WTC11 (cell line): ENCODE measurements at regions of chr20 and their contacts with region 1.

Region 1: DNA sequence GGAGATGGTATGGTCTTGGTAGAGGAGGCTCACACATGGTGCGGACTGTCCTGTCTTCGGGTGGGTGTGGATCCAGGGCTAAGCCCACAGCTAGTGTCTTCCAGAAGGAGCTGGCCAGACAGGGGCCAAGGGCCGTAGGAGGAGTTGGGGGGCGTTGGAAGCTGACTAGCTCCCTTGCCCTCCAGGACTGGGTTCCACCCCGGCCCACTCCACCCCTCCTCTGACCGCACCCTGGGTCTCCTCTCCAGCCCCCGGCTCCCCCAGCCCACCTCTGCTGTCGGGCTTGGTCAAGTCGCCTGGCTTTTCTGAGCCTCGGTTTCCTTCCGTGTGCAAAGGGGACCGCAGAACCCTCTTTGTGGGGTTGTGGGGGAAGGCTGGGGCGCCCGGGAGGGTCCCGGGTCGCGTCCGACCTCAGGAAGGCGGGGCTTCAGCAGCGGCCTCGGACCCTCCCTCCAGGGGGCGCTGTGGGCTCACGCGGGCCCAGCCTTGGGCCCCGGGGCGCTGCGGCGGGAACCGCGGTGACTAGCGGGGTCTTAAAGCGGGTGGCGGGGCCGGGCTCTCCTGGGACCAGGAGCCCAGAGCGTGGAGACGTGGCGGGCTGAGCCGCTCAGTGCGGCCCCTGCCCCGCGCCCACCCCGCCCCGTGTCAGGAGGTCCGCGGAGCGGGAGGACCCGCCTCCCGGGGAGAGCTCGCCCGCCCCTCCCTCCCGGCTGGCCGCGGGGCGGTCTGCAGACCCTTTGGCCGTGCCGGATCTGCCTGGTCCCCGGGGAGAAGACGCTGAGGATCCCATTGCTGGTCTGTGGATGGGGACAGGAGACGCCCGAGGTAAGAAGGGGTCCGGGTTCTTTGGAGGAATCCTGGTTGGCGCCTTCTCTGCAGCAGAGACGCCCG is 5.4 kb downstream of the NPBWR2 start:
- DNase-seq: peak; percentile 79
- ATAC-seq: peak; percentile 82
- H3K4me3 Mint-ChIP-seq: peak overlapping the region; percentile 74
- H3K27ac Mint-ChIP-seq: no peak overlapping the region
- H3K4me1 Mint-ChIP-seq: peaks cover 8% of the 10 kb centered on the region
- H3K27me3 Mint-ChIP-seq: peaks cover 22% of the 10 kb centered on the region
- CTCF ChIP-seq: peak; percentile 91

Region 2: DNA sequence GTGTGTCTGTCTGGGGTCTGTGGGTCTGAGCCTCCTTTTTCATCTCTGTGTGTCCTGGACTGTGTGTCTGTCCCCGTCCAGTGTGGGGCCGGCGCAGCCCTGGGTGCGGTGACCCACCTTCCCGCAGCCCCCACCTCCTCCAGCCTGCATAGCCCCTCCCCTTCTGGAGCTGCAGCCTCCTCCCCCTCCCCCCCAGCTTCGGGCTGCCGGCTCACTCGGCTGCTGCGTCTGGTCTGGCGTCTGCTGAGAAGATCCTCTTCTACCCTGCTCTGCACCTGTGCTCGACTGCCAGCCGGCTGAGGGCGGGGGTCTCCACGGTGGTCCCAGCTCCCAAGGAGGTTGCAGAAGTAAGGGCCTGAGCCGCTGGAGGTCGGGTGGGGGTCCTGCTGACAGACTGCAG is 10.2 kb before region 1 on chr20:
- CTCF ChIA-PET with region 1: interaction called, 77 read pairs
- POLR2A ChIA-PET with region 1: no interaction called
- DNase-seq: no peak
- ATAC-seq: peak; percentile 78
- H3K4me3 Mint-ChIP-seq: no peak overlapping the region
- H3K27ac Mint-ChIP-seq: no peak overlapping the region
- H3K4me1 Mint-ChIP-seq: peaks cover 7% of the 10 kb centered on the region
- H3K27me3 Mint-ChIP-seq: peaks cover 11% of the 10 kb centered on the region; the same call in 1 of the 2 replicates
- CTCF ChIP-seq: no peak

Region 3: DNA sequence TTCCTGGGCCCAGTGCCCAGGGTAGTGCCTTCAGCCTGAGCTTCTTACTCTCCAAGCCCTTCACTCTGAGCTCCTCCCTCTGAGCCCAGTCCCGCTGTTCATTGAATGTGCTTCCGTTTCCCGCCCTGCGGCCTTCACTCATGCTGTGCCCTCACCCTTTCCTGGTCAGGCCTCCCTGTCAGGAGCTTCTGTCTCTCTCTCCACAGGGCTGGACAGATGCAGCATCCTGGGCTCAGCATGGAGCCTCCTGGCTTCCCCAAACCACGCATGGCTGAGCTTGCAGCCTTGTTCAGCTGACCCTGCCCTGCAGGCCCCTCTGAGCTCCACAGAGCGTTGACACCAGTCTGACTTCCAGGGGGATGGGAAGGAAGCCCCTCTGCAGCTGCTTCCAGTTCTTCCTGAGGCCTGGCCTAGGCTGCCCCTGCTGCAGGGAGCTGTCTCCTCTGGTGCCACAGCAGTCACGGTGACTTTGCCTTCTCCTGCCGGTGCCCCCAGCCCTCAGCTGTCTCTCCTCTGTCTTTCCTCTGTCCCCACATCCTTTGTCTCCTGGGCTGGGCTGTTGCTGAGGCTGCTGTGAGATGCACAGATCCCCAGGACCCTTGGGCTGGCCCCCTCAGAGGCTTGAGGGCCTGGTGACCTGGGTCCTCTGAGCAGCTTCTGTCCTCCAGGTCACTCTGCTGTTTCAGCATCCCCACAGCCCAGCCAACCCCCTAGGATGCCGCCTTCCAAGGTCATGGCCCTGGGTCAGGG is 54.3 kb after region 1 on chr20:
- CTCF ChIA-PET with region 1: interaction called, 10 read pairs
- POLR2A ChIA-PET with region 1: no interaction called
- DNase-seq: no peak
- ATAC-seq: no peak
- H3K4me3 Mint-ChIP-seq: no peak overlapping the region
- H3K27ac Mint-ChIP-seq: 0 out of 2 replicates have a peak overlapping the region, but pooled peaks have one; percentile 35
- H3K4me1 Mint-ChIP-seq: peaks cover 45% of the 10 kb centered on the region
- H3K27me3 Mint-ChIP-seq: peaks cover 14% of the 10 kb centered on the region
- CTCF ChIP-seq: no peak